Naive thymus-derived CD4-positive, alpha-beta T cell (primary cell): ENCODE measurements at regions of chr1 and their contacts with region 1.

Region 1: GRCh38 chr1:110872745-110873720 is at the start of gene CD53:
- DNase-seq: peak in 8 of 9 donors; percentile 19 to 82 (median 76)
- ATAC-seq: peak; percentile 86
- H3K4me3 ChIP-seq: peak within 1 kb of the TSS; percentile 84
- H3K4me3 Mint-ChIP-seq: peak within 1 kb of the TSS; percentile 94 to 100 (median 96)
- H3K27ac ChIP-seq: peak within 1 kb of the TSS; percentile 91
- H3K27ac Mint-ChIP-seq: peak within 1 kb of the TSS; percentile 95 to 99 (median 98)
- H3K4me1 ChIP-seq: peaks cover 24 to 48% of the 10 kb centered on the region in 2 donors
- H3K4me1 Mint-ChIP-seq: peaks cover 34 to 72% (median 52%) of the 10 kb centered on the region in 7 donors
- H3K27me3 ChIP-seq: no peaks in the 10 kb centered on the region
- H3K27me3 Mint-ChIP-seq: no peaks in the 10 kb centered on the region
- total RNA-seq, gene CD53: 237 to 513 (median 287) TPM

Region 2: GRCh38 chr1:109850194-109850593 is 1022.8 kb before region 1 on chr1:
- CTCF ChIA-PET with region 1: no interaction called
- POLR2A ChIA-PET with region 1: no interaction called
- intact Hi-C with region 1: no loop called
- DNase-seq: no peak
- ATAC-seq: no peak
- H3K4me3 ChIP-seq: no peak overlapping the region
- H3K4me3 Mint-ChIP-seq: no peak overlapping the region
- H3K27ac ChIP-seq: no peak overlapping the region
- H3K27ac Mint-ChIP-seq: no peak overlapping the region
- H3K4me1 ChIP-seq: no peaks in the 10 kb centered on the region
- H3K4me1 Mint-ChIP-seq: peaks cover 0 to 3% (median 0%) of the 10 kb centered on the region in 7 donors
- H3K27me3 ChIP-seq: no peaks in the 10 kb centered on the region
- H3K27me3 Mint-ChIP-seq: no peaks in the 10 kb centered on the region

Region 3: DNA sequence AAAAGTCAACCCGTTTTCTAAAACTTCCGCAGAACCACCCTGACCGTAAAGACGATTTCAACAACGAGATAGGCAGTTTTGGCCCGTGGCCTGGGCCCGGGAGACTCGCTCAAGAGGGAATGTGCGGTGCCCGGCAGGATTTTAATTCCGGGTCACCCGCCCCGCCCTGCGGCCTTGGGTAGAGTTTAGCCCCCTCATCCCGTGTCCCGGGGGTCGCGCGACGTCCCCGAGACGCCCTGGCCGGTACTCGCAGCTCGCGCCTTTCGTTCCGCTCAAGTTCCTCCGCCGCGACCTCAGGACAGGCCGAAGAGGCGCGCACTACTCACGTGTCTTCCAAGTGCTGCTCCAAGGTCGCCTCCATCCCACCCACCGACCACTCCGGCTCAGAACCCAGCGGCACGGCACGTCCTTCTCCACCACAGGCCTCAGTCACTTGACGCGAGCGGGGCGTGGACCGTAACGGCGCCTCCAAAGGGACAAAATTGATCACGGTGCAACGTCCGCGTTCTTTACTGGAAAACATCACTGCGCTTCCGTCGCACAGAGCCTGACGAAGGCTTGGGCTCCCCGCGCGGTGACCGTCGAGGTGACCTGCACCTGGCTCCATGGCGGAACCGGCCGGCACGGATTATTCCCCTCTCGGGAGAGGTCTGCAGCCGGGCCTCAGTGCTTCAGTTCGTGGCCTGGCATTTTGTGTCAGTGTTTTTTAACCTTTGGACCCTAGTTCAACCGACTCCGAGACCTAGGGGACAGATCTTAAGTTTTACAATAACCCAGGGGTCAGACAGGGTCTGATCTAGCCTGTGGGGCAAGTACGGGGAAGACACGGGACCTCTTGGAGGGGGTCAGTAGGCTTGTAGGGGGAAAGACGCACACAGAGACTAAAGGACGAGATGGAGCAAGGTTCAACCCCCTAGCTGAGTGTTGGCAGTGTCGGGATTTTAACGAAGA is 465.5 kb before region 1 on chr1 and contains the start of gene LAMTOR5:
- CTCF ChIA-PET with region 1: no interaction called
- POLR2A ChIA-PET with region 1: no interaction called
- intact Hi-C with region 1: loop called in 1 of 2 experiments (anchors 10 kb)
- DNase-seq: peak; percentile 77 to 91 (median 89)
- ATAC-seq: peak; percentile 98
- H3K4me3 ChIP-seq: peak within 1 kb of the TSS; percentile 95
- H3K4me3 Mint-ChIP-seq: peak within 1 kb of the TSS; percentile 88 to 100 (median 99)
- H3K27ac ChIP-seq: peak within 1 kb of the TSS; percentile 92
- H3K27ac Mint-ChIP-seq: peak within 1 kb of the TSS; percentile 96 to 100 (median 99)
- H3K4me1 ChIP-seq: peaks cover 19% of the 10 kb centered on the region in 2 donors
- H3K4me1 Mint-ChIP-seq: peaks cover 9 to 39% (median 27%) of the 10 kb centered on the region in 7 donors
- H3K27me3 ChIP-seq: no peaks in the 10 kb centered on the region
- H3K27me3 Mint-ChIP-seq: no peaks in the 10 kb centered on the region
- total RNA-seq, gene LAMTOR5: 63.3 to 146 (median 69.4) TPM

Region 4: DNA sequence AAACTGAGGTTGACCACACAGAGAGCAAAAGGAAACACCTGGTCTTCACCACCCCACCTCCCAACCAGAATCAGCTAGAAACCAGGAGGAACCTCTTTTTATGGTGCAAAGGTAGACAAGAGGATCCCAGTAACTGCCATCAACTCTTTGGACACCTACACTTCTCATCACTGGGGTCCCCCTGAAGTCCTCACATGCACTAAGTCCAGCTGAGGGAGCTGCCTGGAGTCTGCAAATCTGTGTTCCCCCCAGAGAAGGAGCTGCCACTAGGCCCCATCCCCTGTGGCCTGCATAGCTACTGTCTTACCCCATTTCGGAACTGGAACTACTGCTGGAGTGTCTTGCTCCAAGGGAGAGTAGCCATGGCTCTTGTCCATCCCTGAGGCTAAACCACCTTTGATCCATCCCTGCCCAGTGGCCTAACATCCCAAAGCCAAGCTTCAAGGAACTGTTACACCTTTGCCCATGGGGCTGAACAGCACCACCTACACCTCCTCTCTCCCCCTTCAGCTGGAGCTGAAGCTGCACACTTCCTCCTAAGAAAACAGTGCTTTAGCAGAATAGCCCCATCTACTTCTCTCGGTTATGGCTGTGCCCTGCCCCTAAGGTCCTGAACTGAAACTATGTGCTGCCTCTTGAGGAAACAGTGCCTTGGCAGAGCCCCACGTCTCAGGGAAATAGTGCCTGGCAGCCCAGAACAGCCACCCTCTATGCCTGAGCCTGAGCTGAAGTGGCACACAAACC is 85.5 kb before region 1 on chr1:
- CTCF ChIA-PET with region 1: interaction called, 7 read pairs
- POLR2A ChIA-PET with region 1: interaction called, 36 read pairs
- intact Hi-C with region 1: loop called (anchors 1 kb)
- DNase-seq: peak in 7 of 9 donors; percentile 25 to 78 (median 61)
- ATAC-seq: peak; percentile 78
- H3K4me3 ChIP-seq: peak overlapping the region; percentile 40
- H3K4me3 Mint-ChIP-seq: peak overlapping the region; percentile 72 to 88 (median 80)
- H3K27ac ChIP-seq: peak overlapping the region; percentile 55
- H3K27ac Mint-ChIP-seq: peak overlapping the region; percentile 72 to 95 (median 87)
- H3K4me1 ChIP-seq: peaks cover 49 to 56% of the 10 kb centered on the region in 2 donors
- H3K4me1 Mint-ChIP-seq: peaks cover 43 to 78% (median 70%) of the 10 kb centered on the region in 7 donors
- H3K27me3 ChIP-seq: no peaks in the 10 kb centered on the region
- H3K27me3 Mint-ChIP-seq: peaks cover 0 to 14% (median 0%) of the 10 kb centered on the region in 5 donors

Region 5: DNA sequence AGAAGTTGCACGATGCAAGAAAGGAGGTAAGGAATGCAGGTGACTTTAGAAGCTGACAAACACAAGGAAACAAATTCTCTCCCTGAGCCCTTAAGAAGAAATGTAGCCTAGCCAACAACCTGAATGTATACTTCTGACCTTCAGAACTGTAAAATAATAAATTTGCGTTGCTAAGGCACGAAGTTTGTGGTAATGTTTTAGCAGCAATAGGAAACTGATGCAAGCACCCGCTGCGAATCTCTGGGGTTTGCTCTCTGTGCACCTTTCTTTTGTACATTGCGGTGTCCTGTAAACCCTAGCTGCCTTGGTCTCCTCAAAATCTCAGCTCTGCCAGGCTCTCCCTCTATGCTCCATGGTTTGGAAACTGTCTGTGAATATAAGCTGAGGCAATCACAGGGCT is 15.0 kb after region 1 on chr1:
- CTCF ChIA-PET with region 1: interaction called, 4 read pairs
- POLR2A ChIA-PET with region 1: interaction called, 6 read pairs
- intact Hi-C with region 1: loop called in 1 of 2 experiments (anchors 2 kb)
- DNase-seq: no peak
- ATAC-seq: peak; percentile 10
- H3K4me3 ChIP-seq: no peak overlapping the region
- H3K4me3 Mint-ChIP-seq: peak overlapping the region; percentile 44 to 95 (median 62)
- H3K27ac ChIP-seq: peak overlapping the region; percentile 29
- H3K27ac Mint-ChIP-seq: peak overlapping the region; percentile 46 to 93 (median 77)
- H3K4me1 ChIP-seq: peaks cover 59 to 78% of the 10 kb centered on the region in 2 donors
- H3K4me1 Mint-ChIP-seq: peaks cover 77 to 99% (median 95%) of the 10 kb centered on the region in 7 donors
- H3K27me3 ChIP-seq: no peaks in the 10 kb centered on the region
- H3K27me3 Mint-ChIP-seq: no peaks in the 10 kb centered on the region

Region 6: DNA sequence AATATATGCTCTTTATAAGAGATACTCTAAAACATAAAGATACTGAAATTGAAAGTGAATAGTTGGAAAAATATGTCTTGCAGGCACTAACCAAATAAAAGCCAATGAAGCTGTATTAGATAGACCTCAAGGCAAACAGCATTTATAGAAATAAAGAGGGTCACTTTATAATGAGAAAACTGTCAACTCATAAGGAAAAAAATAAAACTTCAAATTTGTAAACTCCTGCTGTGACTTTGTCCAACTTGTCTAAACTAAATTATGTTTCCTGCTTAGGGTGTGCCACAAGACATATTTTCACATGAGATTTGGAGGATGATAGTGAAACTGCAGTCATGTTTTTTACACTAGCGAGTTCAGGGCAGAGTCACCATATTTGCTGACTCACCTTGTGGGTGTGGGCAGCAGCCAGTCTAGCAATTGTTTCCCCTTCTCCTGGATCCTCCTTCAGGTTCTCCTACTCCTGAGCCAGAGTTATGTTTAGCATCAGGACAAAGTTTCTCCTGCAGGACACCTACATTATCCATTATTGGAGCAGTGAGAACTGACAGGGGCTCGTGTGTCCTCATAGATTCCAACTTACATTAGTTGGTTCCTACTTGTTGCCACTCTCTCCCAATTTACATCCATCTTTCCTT is 43.8 kb after region 1 on chr1:
- CTCF ChIA-PET with region 1: no interaction called
- POLR2A ChIA-PET with region 1: no interaction called
- intact Hi-C with region 1: loop called in 1 of 2 experiments (anchors 5 kb)
- DNase-seq: peak in 1 of 9 donors; percentile 34
- ATAC-seq: peak; percentile 53
- H3K4me3 ChIP-seq: no peak overlapping the region
- H3K4me3 Mint-ChIP-seq: peak overlapping the region in 5 of 10 donors; percentile 6 to 79 (median 19)
- H3K27ac ChIP-seq: no peak overlapping the region
- H3K27ac Mint-ChIP-seq: peak overlapping the region in 1 of 9 donors; percentile 75
- H3K4me1 ChIP-seq: peaks cover 0 to 4% of the 10 kb centered on the region in 2 donors
- H3K4me1 Mint-ChIP-seq: peaks cover 7 to 16% (median 13%) of the 10 kb centered on the region in 7 donors
- H3K27me3 ChIP-seq: no peaks in the 10 kb centered on the region
- H3K27me3 Mint-ChIP-seq: peaks cover 0 to 12% (median under 1%) of the 10 kb centered on the region in 5 donors

Region 7: DNA sequence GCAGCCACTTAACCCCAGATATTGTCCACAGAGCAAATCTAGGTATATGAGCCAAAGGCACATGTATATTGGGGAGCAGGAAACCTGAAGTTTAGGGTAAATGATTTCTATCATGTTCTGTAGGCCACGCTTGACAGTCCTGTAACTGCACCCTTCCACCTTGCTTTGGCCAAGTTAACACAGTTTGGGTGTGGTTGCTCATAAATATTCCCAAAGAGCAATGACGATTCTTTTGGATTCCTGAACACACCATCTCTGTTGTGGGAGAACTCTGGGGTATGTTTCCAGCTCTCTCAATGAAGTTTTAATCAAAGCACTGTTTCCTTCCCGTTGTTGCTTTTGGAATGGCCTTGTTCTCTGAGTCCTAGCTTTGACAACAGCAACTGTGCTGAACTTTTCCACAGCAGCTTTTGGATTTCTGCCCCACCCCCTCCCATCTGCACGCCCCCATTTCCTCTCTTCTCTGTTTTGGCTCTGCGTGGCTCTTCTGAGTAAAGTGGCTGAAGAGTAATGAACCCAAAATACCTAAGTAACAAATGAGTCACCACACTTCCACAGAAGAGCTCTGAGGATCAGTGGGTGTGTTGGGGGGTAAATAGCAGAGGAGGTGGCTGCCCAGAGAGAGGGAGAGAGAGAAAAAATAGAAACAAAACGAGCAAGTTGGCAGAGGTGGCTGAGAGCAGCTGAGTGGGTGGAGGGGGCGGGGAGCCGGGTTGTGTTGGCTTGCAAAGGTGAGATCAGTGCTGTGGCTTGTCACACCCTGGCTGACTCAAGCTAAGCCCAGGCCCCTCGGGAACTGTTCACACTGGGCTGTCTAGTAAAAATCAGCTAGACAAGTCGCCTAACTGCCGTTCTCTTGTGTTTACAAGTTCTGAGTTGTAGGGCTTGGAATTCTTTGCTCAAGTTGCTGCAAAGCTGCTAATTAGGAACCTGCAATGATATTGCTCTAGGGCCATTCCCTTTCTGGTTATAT is 719.6 kb after region 1 on chr1:
- CTCF ChIA-PET with region 1: no interaction called
- POLR2A ChIA-PET with region 1: no interaction called
- intact Hi-C with region 1: loop called in 1 of 2 experiments (anchors 10 kb)
- DNase-seq: peak; percentile 22 to 86 (median 56)
- ATAC-seq: peak; percentile 91
- H3K4me3 ChIP-seq: peak overlapping the region; percentile 29
- H3K4me3 Mint-ChIP-seq: peak overlapping the region; percentile 52 to 82 (median 78)
- H3K27ac ChIP-seq: peak overlapping the region; percentile 62
- H3K27ac Mint-ChIP-seq: peak overlapping the region; percentile 83 to 95 (median 91)
- H3K4me1 ChIP-seq: peaks cover 55 to 65% of the 10 kb centered on the region in 2 donors
- H3K4me1 Mint-ChIP-seq: peaks cover 46 to 72% (median 62%) of the 10 kb centered on the region in 7 donors
- H3K27me3 ChIP-seq: no peaks in the 10 kb centered on the region
- H3K27me3 Mint-ChIP-seq: peaks cover 0 to 2% (median 0%) of the 10 kb centered on the region in 5 donors